Esophagus squamous epithelium (tissue), 5 donors: ENCODE measurements at regions of chr1 and their contacts with region 1.

Region 1: GRCh38 chr1:54273092-54273794 is 73.3 kb downstream of the MRPL37 start:
- DNase-seq: no peak
- H3K4me3 ChIP-seq: peak overlapping the region in 2 of 4 donors; percentile 3 to 47
- H3K27ac ChIP-seq: peak overlapping the region; percentile 75 to 97 (median 90)
- H3K4me1 ChIP-seq: peaks cover 35 to 98% (median 67%) of the 10 kb centered on the region in 3 donors
- H3K27me3 ChIP-seq: no peaks in the 10 kb centered on the region
- CTCF ChIP-seq: peak in 3 of 6 experiments; percentile 54 to 71 (median 62)
- POLR2A ChIP-seq: no peak

Region 2: DNA sequence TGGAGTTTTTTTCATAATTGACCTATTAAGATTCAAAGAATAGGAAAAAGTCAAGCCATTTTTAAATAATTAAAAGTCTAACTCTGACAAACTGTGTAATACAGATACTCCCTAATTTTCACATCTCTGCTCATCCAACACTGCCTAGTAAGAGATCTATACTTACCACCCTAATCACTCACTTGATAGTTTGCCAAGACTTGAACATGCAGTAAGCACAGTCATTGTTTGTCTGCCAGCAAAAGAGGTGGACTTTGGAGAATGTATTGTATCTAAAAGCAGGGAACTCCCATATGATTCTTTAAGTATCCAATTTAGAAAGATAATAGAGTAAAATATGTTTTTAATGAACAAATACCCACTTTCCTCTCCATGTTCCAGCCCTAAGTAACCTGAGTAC is 235.8 kb before region 1 on chr1:
- intact Hi-C with region 1: no loop called
- DNase-seq: no peak
- H3K4me3 ChIP-seq: no peak overlapping the region
- H3K27ac ChIP-seq: no peak overlapping the region
- H3K4me1 ChIP-seq: no peaks in the 10 kb centered on the region
- H3K27me3 ChIP-seq: no peaks in the 10 kb centered on the region
- CTCF ChIP-seq: no peak
- POLR2A ChIP-seq: no peak

Region 3: GRCh38 chr1:54406339-54407153 is 133.3 kb after region 1 on chr1 and contains the start of gene SSBP3:
- intact Hi-C with region 1: loop called (anchors 10 kb)
- DNase-seq: peak; percentile 45
- H3K4me3 ChIP-seq: peak within 1 kb of the TSS; percentile 71 to 98 (median 82)
- H3K27ac ChIP-seq: peak within 1 kb of the TSS; percentile 88 to 97 (median 95)
- H3K4me1 ChIP-seq: peaks cover 35 to 69% (median 38%) of the 10 kb centered on the region in 3 donors
- H3K27me3 ChIP-seq: no peaks in the 10 kb centered on the region
- CTCF ChIP-seq: peak in 2 of 6 experiments; percentile 19 to 25
- POLR2A ChIP-seq: peak in 3 of 4 donors; percentile 11 to 91 (median 90)
- total RNA-seq, gene SSBP3: 17.1 to 25.4 (median 21.5) TPM